Activated naive CD4-positive, alpha-beta T cell treated with anti-CD3 and anti-CD28 coated beads for 36 hours (primary cell): ENCODE measurements at regions of chr2 and their contacts with region 1.

Region 1: DNA sequence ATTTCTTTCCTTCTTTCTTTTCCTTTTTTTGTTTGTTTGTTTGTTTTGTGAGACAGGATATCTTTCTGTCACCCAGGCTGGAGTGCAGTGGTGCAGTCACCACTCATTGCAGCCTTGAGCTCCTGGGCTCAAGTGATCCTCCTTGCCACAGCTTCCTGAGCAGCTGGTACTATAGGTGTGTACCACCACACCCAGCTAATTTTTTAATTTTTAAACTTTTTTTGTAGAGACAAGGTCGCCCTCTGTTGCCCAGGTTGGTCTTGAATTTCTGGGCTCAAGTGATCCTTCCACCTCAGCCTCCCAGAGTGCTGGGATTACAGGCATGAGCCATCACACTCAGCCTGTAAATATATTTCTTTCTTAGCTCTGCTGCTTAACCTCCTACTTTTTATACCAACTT is 83.4 kb upstream of the CYP20A1 start:
- DNase-seq: peak; percentile 29
- H3K4me3 Mint-ChIP-seq: no peak overlapping the region
- H3K27ac Mint-ChIP-seq: no peak overlapping the region
- H3K4me1 Mint-ChIP-seq: peaks cover 2% of the 10 kb centered on the region
- H3K27me3 Mint-ChIP-seq: no peaks in the 10 kb centered on the region

Region 2: GRCh38 chr2:202577250-202578183 is 577.9 kb before region 1 on chr2:
- CTCF ChIA-PET with region 1: no interaction called
- intact Hi-C with region 1: loop called (anchors 1 kb)
- DNase-seq: no peak
- H3K4me3 Mint-ChIP-seq: no peak overlapping the region
- H3K27ac Mint-ChIP-seq: no peak overlapping the region
- H3K4me1 Mint-ChIP-seq: peaks cover 2% of the 10 kb centered on the region
- H3K27me3 Mint-ChIP-seq: no peaks in the 10 kb centered on the region